AG04450 (cell line): ENCODE measurements at regions of chr9 and their contacts with region 1.

Region 1: GRCh38 chr9:10268531-10269485 is 344.0 kb downstream of the PTPRD start:
- DNase-seq: no peak
- H3K4me3 ChIP-seq: no peak overlapping the region
- H3K27ac ChIP-seq: no peak overlapping the region
- H3K27me3 ChIP-seq: no peaks in the 10 kb centered on the region
- CTCF ChIP-seq: peak; percentile 58

Region 2: DNA sequence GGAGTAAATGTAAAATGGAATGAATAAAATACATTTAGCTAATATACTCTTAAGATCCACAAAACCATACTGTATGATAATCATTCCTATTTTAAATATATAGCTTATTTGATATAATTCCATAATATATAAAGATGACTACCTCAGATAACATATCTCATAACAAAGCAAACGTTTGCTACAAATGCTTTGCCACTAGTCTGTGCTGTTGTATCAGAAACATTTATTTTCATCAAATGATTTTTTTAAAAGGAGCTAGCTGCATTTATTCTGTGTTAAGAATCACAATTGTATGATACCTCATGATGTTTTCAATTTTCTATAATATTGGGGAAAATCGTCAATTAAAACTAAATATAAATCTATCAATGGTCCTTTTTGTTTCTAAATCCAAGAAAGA is 223.2 kb before region 1 on chr9:
- CTCF ChIA-PET with region 1: interaction called, 23 read pairs
- POLR2A ChIA-PET with region 1: no interaction called
- DNase-seq: no peak
- H3K4me3 ChIP-seq: no peak overlapping the region
- H3K27ac ChIP-seq: no peak overlapping the region
- H3K27me3 ChIP-seq: no peaks in the 10 kb centered on the region
- CTCF ChIP-seq: peak; percentile 56

Region 3: GRCh38 chr9:10059044-10059443 is 209.8 kb before region 1 on chr9:
- CTCF ChIA-PET with region 1: interaction called, 52 read pairs
- POLR2A ChIA-PET with region 1: no interaction called
- DNase-seq: peak; percentile 13
- H3K4me3 ChIP-seq: no peak overlapping the region
- H3K27ac ChIP-seq: no peak overlapping the region
- H3K27me3 ChIP-seq: no peaks in the 10 kb centered on the region
- CTCF ChIP-seq: no peak

Region 4: GRCh38 chr9:10079284-10079964 is 189.4 kb before region 1 on chr9:
- CTCF ChIA-PET with region 1: no interaction called
- POLR2A ChIA-PET with region 1: no interaction called
- DNase-seq: no peak
- H3K4me3 ChIP-seq: no peak overlapping the region
- H3K27ac ChIP-seq: no peak overlapping the region
- H3K27me3 ChIP-seq: no peaks in the 10 kb centered on the region
- CTCF ChIP-seq: no peak

Region 5: GRCh38 chr9:10232352-10232930 is 36.4 kb before region 1 on chr9:
- CTCF ChIA-PET with region 1: interaction called, 17 read pairs
- POLR2A ChIA-PET with region 1: no interaction called
- DNase-seq: no peak
- H3K4me3 ChIP-seq: no peak overlapping the region
- H3K27ac ChIP-seq: no peak overlapping the region
- H3K27me3 ChIP-seq: no peaks in the 10 kb centered on the region
- CTCF ChIP-seq: peak; percentile 44